Kidney (tissue), 22 donors: ENCODE measurements at regions of chr11 and their contacts with region 1.

Region 1: GRCh38 chr11:74726547-74727182 is 4.6 kb downstream of the CHRDL2 start:
- DNase-seq: peak; percentile 83 to 92 (median 84)
- H3K4me3 ChIP-seq: no peak overlapping the region
- H3K27ac ChIP-seq: no peak overlapping the region
- H3K4me1 ChIP-seq: peaks cover 0 to 3% (median 3%) of the 10 kb centered on the region in 3 donors
- H3K27me3 ChIP-seq: peaks cover 7% of the 10 kb centered on the region
- CTCF ChIP-seq: peak; percentile 95

Region 2: GRCh38 chr11:74634537-74634936 is 92.1 kb before region 1 on chr11:
- intact Hi-C with region 1: no loop called
- DNase-seq: no peak
- H3K4me3 ChIP-seq: no peak overlapping the region
- H3K27ac ChIP-seq: no peak overlapping the region
- H3K4me1 ChIP-seq: no peaks in the 10 kb centered on the region
- H3K27me3 ChIP-seq: no peaks in the 10 kb centered on the region
- CTCF ChIP-seq: peak; percentile 20

Region 3: DNA sequence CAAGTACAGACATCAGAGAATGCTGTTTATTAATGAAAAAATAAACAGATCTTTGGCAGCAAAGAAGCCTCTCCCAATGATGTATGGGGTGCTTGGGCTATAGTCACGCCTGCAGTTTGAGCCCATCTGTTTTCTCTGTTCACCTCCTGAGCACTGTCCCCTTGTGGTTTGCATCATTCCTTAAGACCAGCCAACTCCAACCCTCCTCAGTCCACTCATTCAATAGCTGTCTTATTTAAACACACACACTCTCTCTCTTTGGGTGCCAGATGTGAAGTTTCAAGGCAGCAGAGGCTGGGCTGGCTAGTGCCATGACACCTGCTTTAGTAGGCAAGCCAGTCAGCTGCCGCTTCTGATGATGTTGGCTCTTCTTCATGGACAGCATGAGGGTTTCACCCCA is 76.2 kb before region 1 on chr11:
- intact Hi-C with region 1: loop called (anchors 10 kb)
- DNase-seq: peak in 1 of 5 donors; percentile 5
- H3K4me3 ChIP-seq: no peak overlapping the region
- H3K27ac ChIP-seq: no peak overlapping the region
- H3K4me1 ChIP-seq: peaks cover 0 to 2% (median 0%) of the 10 kb centered on the region in 3 donors
- H3K27me3 ChIP-seq: no peaks in the 10 kb centered on the region
- CTCF ChIP-seq: no peak